Natural killer cell (primary cell): ENCODE measurements at regions of chr11 and their contacts with region 1.

Region 1: DNA sequence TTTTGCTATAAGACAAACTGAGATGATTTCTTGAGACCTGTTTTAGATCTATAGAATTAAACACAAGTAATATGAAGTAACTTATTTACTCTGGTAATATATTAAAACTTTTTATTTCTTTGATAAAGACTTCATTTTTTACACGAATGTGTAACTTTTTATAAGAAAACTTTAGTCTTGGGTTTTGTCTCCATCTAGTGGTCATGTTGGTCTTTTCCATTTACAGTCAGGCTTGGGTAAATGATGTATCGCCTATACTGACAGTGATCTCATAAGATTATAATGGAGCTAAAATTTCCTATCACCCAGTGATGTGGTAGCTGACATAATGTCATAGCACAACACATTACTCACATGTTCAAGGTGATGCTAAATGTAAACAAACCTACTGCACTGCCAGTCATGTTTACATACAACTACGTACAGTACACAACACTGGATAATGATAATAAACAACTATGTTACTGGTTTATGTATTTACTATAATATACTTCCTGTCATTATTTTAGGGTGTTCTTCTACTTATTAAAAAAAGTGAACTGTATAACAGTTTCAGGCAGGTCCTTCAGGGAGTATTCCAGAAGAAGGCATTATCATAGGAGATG is 7.5 kb upstream of the C11orf97 start:
- DNase-seq: peak in 1 of 2 donors; percentile 77
- ATAC-seq: peak; percentile 65 to 68 (median 68)
- H3K4me3 ChIP-seq: no peak overlapping the region
- H3K4me3 Mint-ChIP-seq: no peak overlapping the region
- H3K27ac ChIP-seq: no peak overlapping the region
- H3K27ac Mint-ChIP-seq: no peak overlapping the region
- H3K4me1 ChIP-seq: no peaks in the 10 kb centered on the region
- H3K4me1 Mint-ChIP-seq: no peaks in the 10 kb centered on the region
- H3K27me3 ChIP-seq: no peaks in the 10 kb centered on the region
- H3K27me3 Mint-ChIP-seq: no peaks in the 10 kb centered on the region
- CTCF ChIP-seq: peak; percentile 98

Region 2: DNA sequence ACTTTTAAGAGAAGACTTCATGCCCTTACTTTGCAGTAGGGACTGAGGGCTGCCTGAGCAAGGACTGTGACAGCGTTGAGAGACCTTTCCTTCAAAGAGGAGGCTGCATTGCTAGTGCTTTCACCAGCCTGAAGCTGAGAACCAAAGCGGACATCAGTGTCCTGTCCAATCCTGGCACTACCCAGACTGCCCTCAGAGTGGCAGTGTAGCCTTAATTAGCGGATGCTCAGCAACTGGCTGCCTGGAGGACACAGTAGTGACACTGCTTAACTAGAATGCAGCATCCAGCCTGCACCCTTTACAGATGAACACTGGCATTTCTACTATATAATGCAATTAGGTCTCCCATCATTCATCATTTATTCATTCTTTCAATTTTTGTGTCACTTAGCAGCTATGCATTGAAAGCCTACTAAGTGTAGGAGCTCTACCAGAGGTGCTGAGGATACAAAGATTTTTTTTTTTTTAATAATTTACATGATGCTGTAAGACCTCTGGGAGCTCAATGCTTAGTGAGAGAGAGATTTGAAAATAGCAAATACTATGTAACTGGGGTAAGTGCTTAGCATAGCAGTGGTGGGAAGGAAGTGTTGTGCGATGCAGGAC is 1270.1 kb before region 1 on chr11:
- intact Hi-C with region 1: loop called (anchors 10 kb)
- DNase-seq: peak; percentile 47 to 79
- ATAC-seq: peak; percentile 92 to 99 (median 99)
- H3K4me3 ChIP-seq: no peak overlapping the region
- H3K4me3 Mint-ChIP-seq: no peak overlapping the region
- H3K27ac ChIP-seq: no peak overlapping the region
- H3K27ac Mint-ChIP-seq: no peak overlapping the region
- H3K4me1 ChIP-seq: no peaks in the 10 kb centered on the region
- H3K4me1 Mint-ChIP-seq: no peaks in the 10 kb centered on the region
- H3K27me3 ChIP-seq: no peaks in the 10 kb centered on the region
- H3K27me3 Mint-ChIP-seq: peaks cover 6 to 33% of the 10 kb centered on the region in 2 donors
- CTCF ChIP-seq: peak; percentile 73

Region 3: DNA sequence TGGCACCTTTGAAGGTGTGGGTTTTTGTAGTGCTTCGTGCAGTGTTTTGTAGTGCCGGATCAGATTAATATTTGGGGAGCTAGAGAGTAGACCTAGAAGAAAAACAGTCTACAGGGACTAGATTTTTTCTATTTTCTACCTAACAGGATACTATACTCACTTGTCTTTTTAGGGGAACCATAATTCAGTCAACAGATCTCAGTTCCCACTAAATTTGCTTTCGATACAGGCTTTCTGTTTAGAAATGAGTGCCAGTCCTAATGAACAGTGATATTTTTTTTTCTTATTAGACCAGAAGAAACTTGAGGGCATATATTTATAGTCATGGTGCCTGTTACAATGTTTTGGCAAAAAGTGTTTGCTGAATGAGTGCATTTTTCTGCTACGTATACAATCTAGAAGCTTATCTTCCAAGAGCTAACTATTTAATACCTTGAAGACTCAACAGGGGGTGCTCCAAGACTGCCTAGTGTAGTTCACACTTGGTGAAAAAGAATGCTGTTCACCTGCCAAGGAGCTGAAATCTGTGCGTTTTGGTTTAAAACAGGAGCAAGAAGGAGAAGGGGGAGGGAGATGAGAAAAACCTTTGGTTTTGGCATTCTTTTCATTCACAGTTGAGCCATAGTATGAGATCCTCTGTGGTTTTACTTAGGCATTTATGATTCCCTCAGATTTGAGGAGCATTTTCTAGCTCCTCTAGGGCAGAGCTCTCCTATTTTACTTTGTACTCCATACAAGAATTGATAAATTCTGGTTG is 609.5 kb before region 1 on chr11:
- intact Hi-C with region 1: loop called (anchors 2 kb)
- DNase-seq: peak in 1 of 2 donors; percentile 60
- ATAC-seq: peak in 1 of 3 donors; percentile 49
- H3K4me3 ChIP-seq: no peak overlapping the region
- H3K4me3 Mint-ChIP-seq: no peak overlapping the region
- H3K27ac ChIP-seq: no peak overlapping the region
- H3K27ac Mint-ChIP-seq: no peak overlapping the region
- H3K4me1 ChIP-seq: no peaks in the 10 kb centered on the region
- H3K4me1 Mint-ChIP-seq: no peaks in the 10 kb centered on the region
- H3K27me3 ChIP-seq: no peaks in the 10 kb centered on the region
- H3K27me3 Mint-ChIP-seq: peaks cover 18 to 45% of the 10 kb centered on the region in 2 donors
- CTCF ChIP-seq: no peak

Region 4: GRCh38 chr11:93921695-93922468 is 582.9 kb before region 1 on chr11:
- intact Hi-C with region 1: loop called (anchors 10 kb)
- DNase-seq: peak in 1 of 2 donors; percentile 36
- ATAC-seq: no peak
- H3K4me3 ChIP-seq: no peak overlapping the region
- H3K4me3 Mint-ChIP-seq: no peak overlapping the region
- H3K27ac ChIP-seq: no peak overlapping the region
- H3K27ac Mint-ChIP-seq: no peak overlapping the region
- H3K4me1 ChIP-seq: no peaks in the 10 kb centered on the region
- H3K4me1 Mint-ChIP-seq: no peaks in the 10 kb centered on the region
- H3K27me3 ChIP-seq: no peaks in the 10 kb centered on the region
- H3K27me3 Mint-ChIP-seq: peaks cover 12 to 32% of the 10 kb centered on the region in 2 donors
- CTCF ChIP-seq: no peak

Region 5: DNA sequence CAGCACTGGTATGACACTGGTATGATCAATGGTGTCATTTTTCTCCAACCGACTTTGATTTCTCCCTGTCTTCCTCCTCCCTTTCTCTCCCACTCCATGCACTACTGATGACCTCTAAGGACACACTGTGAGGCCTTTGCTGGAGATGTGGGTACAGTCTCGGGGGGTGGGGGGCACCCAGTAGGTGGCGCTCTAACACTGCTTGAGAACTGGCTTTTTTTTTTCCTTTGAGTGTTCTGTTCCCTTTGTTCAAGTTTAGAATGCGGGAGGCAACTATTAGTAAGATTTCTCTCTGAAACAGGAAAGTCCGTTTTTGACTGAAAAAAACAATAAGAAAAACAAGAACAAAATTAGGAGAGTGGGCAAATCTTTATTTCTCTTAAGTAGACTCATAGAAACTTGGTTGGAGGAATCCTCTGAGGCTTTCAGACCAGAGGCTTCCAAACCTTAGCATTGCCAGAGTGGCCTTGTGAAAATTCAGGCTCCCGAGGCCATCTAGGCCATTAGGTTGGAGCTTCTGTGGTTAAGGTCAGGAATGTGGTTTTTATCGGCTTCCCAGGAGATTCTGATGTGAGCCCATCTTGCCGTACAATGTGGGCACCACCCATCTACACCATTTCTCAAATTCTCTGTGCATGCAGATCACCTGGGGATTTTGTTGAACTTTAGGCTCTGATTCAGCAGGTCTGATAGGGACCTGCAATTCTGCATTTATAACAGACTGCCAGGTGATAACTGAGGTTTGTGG is 332.9 kb before region 1 on chr11:
- intact Hi-C with region 1: loop called (anchors 10 kb)
- DNase-seq: peak; percentile 19 to 50
- ATAC-seq: peak; percentile 49 to 65 (median 62)
- H3K4me3 ChIP-seq: no peak overlapping the region
- H3K4me3 Mint-ChIP-seq: no peak overlapping the region
- H3K27ac ChIP-seq: no peak overlapping the region
- H3K27ac Mint-ChIP-seq: no peak overlapping the region
- H3K4me1 ChIP-seq: peaks cover 2% of the 10 kb centered on the region
- H3K4me1 Mint-ChIP-seq: peaks cover 53 to 54% of the 10 kb centered on the region in 2 donors
- H3K27me3 ChIP-seq: no peaks in the 10 kb centered on the region
- H3K27me3 Mint-ChIP-seq: no peaks in the 10 kb centered on the region
- CTCF ChIP-seq: peak; percentile 58

Region 6: GRCh38 chr11:94325681-94326080 is 179.1 kb before region 1 on chr11:
- intact Hi-C with region 1: loop called (anchors 1 kb)
- DNase-seq: peak; percentile 57 to 65
- ATAC-seq: peak; percentile 74 to 95 (median 91)
- H3K4me3 ChIP-seq: no peak overlapping the region
- H3K4me3 Mint-ChIP-seq: no peak overlapping the region
- H3K27ac ChIP-seq: no peak overlapping the region
- H3K27ac Mint-ChIP-seq: no peak overlapping the region
- H3K4me1 ChIP-seq: no peaks in the 10 kb centered on the region
- H3K4me1 Mint-ChIP-seq: peaks cover 0 to 6% of the 10 kb centered on the region in 2 donors
- H3K27me3 ChIP-seq: no peaks in the 10 kb centered on the region
- H3K27me3 Mint-ChIP-seq: peaks cover 10 to 19% of the 10 kb centered on the region in 2 donors
- CTCF ChIP-seq: peak; percentile 71